Pancreas (tissue), 10 donors: ENCODE measurements at regions of chr2 and their contacts with region 1.

Region 1: GRCh38 chr2:163132850-163133249 is 294.3 kb upstream of the KCNH7 start:
- DNase-seq: no peak
- ATAC-seq: peak in 2 of 4 donors; percentile 38 to 45
- H3K4me3 ChIP-seq: no peak overlapping the region
- H3K27ac ChIP-seq: no peak overlapping the region
- H3K4me1 ChIP-seq: no peaks in the 10 kb centered on the region
- H3K27me3 ChIP-seq: no peaks in the 10 kb centered on the region
- CTCF ChIP-seq: peak in 3 of 4 donors; percentile 23 to 40 (median 31)

Region 2: DNA sequence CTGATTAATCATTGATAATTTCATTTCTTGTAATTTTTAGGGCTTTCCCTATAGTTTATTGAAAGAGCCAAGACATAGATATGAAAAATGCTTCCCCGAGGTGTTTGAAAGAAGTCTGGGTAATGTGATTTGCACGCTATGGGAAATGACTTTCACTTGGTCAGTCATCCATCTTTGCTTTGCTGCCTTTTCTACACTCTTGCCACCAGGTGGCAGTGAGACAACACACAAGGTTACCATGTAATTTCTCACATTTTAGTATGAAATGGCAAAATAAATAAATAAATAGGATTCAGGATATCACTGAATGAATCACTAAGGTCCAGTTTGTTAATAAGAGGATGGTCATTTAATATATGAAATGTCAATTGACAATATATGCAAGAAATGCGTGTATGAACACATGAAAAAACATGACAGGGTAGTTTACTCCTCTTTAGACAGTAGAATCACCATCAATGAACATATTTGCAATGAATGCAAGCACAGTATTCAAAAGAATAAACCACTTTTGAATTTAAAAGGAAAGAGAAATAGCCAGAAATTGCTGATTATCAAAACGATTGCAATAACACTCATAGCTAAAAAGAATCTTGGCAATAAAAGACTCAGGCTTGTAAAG is 242.0 kb before region 1 on chr2:
- intact Hi-C with region 1: loop called in 2 of 3 experiments (anchors 5 to 10 kb)
- DNase-seq: peak in 3 of 6 donors; percentile 4 to 38 (median 11)
- ATAC-seq: peak in 3 of 4 donors; percentile 77 to 79 (median 78)
- H3K4me3 ChIP-seq: no peak overlapping the region
- H3K27ac ChIP-seq: no peak overlapping the region
- H3K4me1 ChIP-seq: no peaks in the 10 kb centered on the region
- H3K27me3 ChIP-seq: no peaks in the 10 kb centered on the region
- CTCF ChIP-seq: peak in 3 of 4 donors; percentile 51 to 64 (median 62)

Region 3: GRCh38 chr2:162963156-162963555 is 169.7 kb before region 1 on chr2:
- intact Hi-C with region 1: no loop called
- DNase-seq: no peak
- ATAC-seq: no peak
- H3K4me3 ChIP-seq: no peak overlapping the region
- H3K27ac ChIP-seq: no peak overlapping the region
- H3K4me1 ChIP-seq: no peaks in the 10 kb centered on the region
- H3K27me3 ChIP-seq: no peaks in the 10 kb centered on the region
- CTCF ChIP-seq: no peak

Region 4: GRCh38 chr2:163291790-163292189 is 158.9 kb after region 1 on chr2:
- intact Hi-C with region 1: no loop called
- DNase-seq: no peak
- ATAC-seq: no peak
- H3K4me3 ChIP-seq: no peak overlapping the region
- H3K27ac ChIP-seq: no peak overlapping the region
- H3K4me1 ChIP-seq: no peaks in the 10 kb centered on the region
- H3K27me3 ChIP-seq: no peaks in the 10 kb centered on the region
- CTCF ChIP-seq: no peak